GM10248 (cell line): ENCODE measurements at regions of chr3 and their contacts with region 1.

Region 1: DNA sequence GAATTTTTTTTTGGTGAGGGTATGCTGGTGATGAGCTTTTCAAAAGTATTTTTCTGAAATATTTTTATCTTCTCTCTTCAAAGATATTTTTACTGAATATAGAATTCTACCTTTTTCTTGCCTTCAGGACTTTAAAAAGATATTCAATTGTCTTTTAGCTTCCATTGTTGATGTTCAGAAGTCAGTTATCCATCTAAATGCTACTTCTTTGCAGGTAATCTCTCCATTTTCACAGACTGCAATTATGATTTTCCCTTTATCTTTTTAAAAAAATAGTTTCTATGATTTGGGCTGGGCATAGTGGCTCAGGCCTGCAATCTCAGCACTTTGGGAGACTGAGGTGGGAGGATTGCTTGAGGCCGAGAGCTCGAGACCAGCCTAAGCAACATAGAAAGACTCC is 222.4 kb downstream of the IL20RB start:
- DNase-seq: no peak
- CTCF ChIP-seq: no peak

Region 2: DNA sequence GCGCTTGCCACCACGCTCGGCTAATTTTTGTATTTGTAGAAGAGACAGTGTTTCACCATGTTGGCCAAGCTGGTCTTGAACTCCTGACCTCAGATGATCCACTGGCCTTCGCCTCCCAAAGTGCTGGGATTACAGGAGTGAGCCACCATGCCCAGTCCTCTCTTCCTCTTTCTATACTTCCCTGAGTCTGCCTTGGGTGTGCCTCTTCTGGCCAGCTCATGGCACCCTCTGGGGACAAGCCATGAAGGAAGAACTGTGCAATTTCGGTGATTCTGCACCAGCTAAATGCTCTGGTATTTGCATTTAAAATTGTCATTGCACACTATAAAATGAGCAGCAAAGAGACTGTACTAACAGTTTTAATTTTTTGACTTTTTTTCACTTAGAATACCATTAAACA is 155.9 kb before region 1 on chr3:
- CTCF ChIA-PET with region 1: no interaction called
- POLR2A ChIA-PET with region 1: no interaction called
- DNase-seq: no peak
- CTCF ChIP-seq: no peak

Region 3: GRCh38 chr3:137194301-137194700 is 14.1 kb after region 1 on chr3:
- CTCF ChIA-PET with region 1: interaction called, 11 read pairs
- POLR2A ChIA-PET with region 1: no interaction called
- DNase-seq: no peak
- CTCF ChIP-seq: no peak

Region 4: GRCh38 chr3:137724240-137724639 is 544.0 kb after region 1 on chr3:
- CTCF ChIA-PET with region 1: no interaction called
- POLR2A ChIA-PET with region 1: no interaction called
- DNase-seq: no peak
- CTCF ChIP-seq: no peak